Sigmoid colon (tissue), 7 donors: ENCODE measurements at regions of chr15 and their contacts with region 1.

Region 1: DNA sequence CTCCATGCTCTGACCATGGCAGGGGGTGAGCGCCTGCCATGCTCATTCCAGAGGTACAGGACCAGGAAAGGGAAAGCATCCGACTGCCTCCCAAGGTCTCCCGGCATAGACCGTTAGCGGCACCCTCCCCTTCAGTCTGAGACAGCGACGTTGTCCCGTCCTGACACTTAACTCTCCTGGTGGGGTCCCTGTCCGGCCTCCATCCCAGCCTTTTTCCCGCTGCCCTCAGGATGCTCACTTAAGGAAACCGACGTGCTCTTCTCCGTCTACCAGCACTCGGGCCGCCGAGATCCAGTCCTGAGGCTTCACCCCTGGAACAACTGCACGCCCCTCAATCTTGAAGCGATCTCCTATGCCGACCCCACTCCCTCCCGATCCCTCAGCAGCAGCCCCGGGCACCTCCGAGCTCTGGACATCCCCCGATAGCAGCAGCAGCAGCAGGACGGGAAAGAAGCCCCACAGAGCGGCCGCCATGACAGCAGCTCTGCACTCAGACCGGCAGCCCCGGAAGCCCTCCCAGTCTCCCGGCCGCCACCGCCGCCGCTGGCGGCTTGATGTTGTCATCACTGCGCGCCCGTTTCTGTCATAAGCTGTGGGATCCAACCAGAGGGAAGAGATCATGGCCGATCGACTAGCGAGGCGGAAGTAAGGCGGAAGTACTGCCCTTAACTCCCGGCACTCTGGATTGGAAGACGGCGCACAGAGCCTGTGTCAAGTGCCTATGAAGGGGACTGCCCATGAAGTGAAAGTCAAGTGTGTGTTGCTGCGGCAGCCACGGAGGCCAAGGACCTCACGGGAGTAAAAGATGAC is at the starts of genes EMC7 and PGBD4:
- DNase-seq: peak; percentile 99
- H3K4me3 ChIP-seq: peak within 1 kb of the TSS; percentile 65 to 89 (median 72)
- H3K27ac ChIP-seq: peak within 1 kb of the TSS; percentile 81 to 89 (median 86)
- H3K4me1 ChIP-seq: peaks cover 4 to 30% (median 24%) of the 10 kb centered on the region in 4 donors
- H3K27me3 ChIP-seq: no peaks in the 10 kb centered on the region
- CTCF ChIP-seq: no peak
- EP300 ChIP-seq: peak in 1 of 4 donors; percentile 6
- POLR2A ChIP-seq: peak; percentile 52 to 64
- total RNA-seq, gene EMC7: 34.8 to 55.1 (median 47.7) TPM
- total RNA-seq, gene PGBD4: 0.54 to 1.4 (median 1.4) TPM

Region 2: GRCh38 chr15:34084086-34084485 is 17.5 kb before region 1 on chr15:
- intact Hi-C with region 1: loop called (anchors 2 kb)
- DNase-seq: peak; percentile 85
- H3K4me3 ChIP-seq: no peak overlapping the region
- H3K27ac ChIP-seq: peak overlapping the region in 3 of 4 donors; percentile 56 to 69 (median 62)
- H3K4me1 ChIP-seq: peaks cover 0 to 15% (median 6%) of the 10 kb centered on the region in 4 donors
- H3K27me3 ChIP-seq: no peaks in the 10 kb centered on the region
- CTCF ChIP-seq: no peak
- EP300 ChIP-seq: no peak
- POLR2A ChIP-seq: no peak

Region 3: DNA sequence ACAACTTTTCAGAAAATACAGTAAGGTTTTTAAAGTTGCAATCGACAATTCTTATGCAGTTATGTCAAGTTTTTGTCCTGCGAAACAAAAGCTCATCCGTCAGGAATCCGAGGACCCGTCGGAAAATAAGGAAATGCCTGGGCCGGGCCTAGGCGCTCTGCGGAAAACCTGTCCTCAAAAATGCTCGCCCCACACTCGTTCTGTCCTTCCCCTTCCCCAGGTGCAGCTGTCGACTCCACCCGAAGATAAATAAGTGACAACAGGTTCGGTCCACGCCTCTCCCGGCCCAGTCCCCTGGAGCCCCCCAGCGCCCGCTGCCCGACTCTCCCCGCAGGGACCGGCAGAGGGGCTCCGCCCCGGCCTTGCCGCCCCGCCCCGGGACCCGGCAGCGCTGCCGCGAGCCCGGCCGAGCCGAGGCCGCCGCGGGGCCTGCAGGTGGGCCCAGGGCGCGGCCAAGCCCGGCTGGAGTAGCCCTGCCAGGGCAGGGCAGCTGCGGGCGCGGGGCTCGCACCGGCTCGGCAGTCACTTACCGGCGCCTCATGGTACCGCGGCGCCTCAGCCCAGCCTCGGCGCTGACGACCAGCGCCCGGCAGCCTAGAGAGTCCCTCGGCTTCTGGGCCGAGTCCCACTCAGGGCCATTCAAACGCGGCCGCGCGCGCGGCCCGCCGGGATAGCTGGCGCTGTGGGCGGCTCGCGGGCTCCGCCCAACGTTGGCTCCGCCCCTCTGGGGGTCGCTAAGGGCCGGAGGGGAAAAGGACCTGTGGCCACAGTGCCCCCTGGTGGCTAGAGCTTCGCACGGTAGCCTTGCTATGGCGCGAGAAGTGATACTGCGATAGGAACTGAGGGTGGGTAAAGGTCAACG is 108.1 kb after region 1 on chr15 and contains the start of gene KATNBL1:
- intact Hi-C with region 1: loop called (anchors 2 kb)
- DNase-seq: peak; percentile 97
- H3K4me3 ChIP-seq: peak within 1 kb of the TSS; percentile 58 to 75 (median 70)
- H3K27ac ChIP-seq: peak within 1 kb of the TSS; percentile 86 to 91 (median 88)
- H3K4me1 ChIP-seq: peaks cover 0 to 14% (median 10%) of the 10 kb centered on the region in 4 donors
- H3K27me3 ChIP-seq: no peaks in the 10 kb centered on the region
- CTCF ChIP-seq: peak; percentile 83 to 94 (median 90)
- EP300 ChIP-seq: no peak
- POLR2A ChIP-seq: peak; percentile 31 to 48
- total RNA-seq, gene KATNBL1: 39.5 to 88.9 (median 68.2) TPM

Region 4: GRCh38 chr15:34342737-34343575 is 241.4 kb after region 1 on chr15 and contains the starts of genes NOP10 and NUTM1:
- intact Hi-C with region 1: loop called (anchors 2 kb)
- DNase-seq: peak; percentile 94
- H3K4me3 ChIP-seq: peak within 1 kb of the TSS; percentile 53 to 70 (median 67)
- H3K27ac ChIP-seq: peak within 1 kb of the TSS; percentile 84 to 87 (median 86)
- H3K4me1 ChIP-seq: peaks cover 0 to 17% (median 11%) of the 10 kb centered on the region in 4 donors
- H3K27me3 ChIP-seq: no peaks in the 10 kb centered on the region
- CTCF ChIP-seq: peak; percentile 91 to 98 (median 96)
- EP300 ChIP-seq: no peak
- POLR2A ChIP-seq: peak; percentile 61 to 71
- total RNA-seq, gene NOP10: 67.6 to 160 (median 118) TPM
- total RNA-seq, gene NUTM1: not detected

Region 5: GRCh38 chr15:34587717-34588674 is 486.4 kb after region 1 on chr15:
- intact Hi-C with region 1: loop called (anchors 10 kb)
- DNase-seq: peak; percentile 84
- H3K4me3 ChIP-seq: peak overlapping the region in 2 of 4 donors; percentile 32 to 36
- H3K27ac ChIP-seq: peak overlapping the region; percentile 42 to 55 (median 48)
- H3K4me1 ChIP-seq: peaks cover 0 to 12% (median 7%) of the 10 kb centered on the region in 4 donors
- H3K27me3 ChIP-seq: no peaks in the 10 kb centered on the region
- CTCF ChIP-seq: peak; percentile 65 to 77 (median 73)
- EP300 ChIP-seq: no peak
- POLR2A ChIP-seq: peak in 1 of 2 donors; percentile 23